ENCODE measurements at regions of chr17 and their contacts with region 1.

Region 1: DNA sequence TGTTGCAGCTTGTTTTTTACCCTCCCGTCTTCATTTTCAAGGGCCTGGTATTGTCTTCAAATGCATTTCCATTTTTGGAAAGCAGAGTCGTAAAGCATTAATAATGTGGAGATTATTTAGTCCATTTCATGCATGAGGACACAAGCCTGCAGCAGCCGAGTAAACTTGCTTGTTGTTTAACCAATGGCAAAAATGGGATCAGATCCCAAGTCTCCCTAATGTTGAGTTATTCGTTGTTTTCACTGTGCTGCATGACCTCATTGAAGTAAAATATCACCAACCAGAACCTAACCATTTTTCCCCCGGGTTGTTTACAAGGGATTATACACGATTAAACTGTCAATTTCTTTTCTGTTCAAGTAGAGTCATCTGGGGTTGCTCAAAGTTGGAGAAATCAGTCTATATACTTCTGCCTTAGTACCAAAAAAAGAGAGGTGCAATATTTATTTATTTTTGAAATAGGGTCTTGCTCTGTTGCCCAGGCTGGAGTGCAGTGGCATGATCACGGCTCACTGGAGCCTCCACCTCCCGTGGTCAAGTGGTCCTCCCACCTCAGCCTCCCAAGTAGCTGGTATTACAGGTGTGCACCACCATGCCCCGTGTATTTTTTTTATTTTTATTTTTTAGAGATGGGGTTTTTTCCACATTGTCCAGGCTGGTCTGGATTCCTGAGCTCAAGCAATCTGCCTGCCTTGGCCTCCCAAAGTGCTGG is 12.4 kb downstream of the AMZ2 start:
- DNase-seq: no peak
- H3K4me3 ChIP-seq: no peak overlapping the region
- CTCF ChIP-seq: no peak
- POLR2A ChIP-seq: no peak

Region 2: DNA sequence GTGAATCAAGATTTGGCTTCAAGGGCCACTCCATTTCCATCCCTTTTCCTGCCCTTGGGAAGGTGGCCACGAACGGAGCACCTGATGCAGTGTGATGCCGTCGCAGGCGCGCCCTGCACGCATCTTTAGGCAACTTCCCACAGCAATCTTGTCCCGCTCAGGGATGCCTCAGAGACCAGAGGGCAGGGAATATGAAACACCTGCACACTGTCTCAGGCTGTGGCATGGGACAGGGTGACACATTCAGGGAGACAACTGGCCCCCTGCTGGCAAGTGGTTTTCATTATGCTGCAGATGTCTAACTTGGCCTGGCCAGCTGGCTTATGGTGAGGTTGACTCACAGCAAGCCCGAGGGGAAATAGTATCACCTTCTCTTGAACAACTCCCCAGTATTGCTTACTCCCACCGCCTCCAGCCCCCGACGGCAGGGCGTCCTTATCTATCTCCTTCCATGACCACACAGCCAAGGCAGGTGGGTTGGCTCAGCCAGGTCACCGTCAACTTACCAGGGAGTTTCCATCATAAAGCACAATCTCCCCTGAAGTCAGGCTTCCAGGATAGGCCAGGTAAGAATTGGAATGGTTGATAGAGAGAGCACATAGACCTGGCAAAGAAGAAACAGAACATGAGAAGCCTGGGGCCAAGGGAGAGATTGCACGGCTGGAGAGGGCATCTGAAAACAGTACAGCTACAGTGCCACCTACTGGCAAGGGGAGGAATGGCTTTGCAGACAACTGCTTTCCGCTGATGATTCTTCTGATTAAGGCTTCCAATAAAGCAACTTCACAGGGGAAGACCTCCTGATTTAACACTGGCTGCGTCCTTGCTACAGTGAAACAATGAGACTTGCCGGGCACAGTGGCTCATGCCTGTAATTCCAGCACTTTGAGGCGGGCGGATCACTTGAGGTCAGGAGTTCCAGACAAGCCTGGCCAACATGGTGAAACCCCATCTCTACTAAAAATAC is 176.0 kb after region 1 on chr17:
- intact Hi-C with region 1: loop called (anchors 10 kb)
- DNase-seq: peak; percentile 84 to 96
- H3K4me3 ChIP-seq: no peak overlapping the region
- CTCF ChIP-seq: peak in 1 of 3 donors; percentile 94
- POLR2A ChIP-seq: no peak

Region 3: GRCh38 chr17:68497885-68498319 is 237.7 kb after region 1 on chr17:
- intact Hi-C with region 1: no loop called
- DNase-seq: no peak
- H3K4me3 ChIP-seq: no peak overlapping the region
- CTCF ChIP-seq: no peak
- POLR2A ChIP-seq: no peak